Activated naive CD4-positive, alpha-beta T cell treated with anti-CD3 and anti-CD28 coated beads, Interleukin-2, amount 10 ng/mL, durations not matched to agents 7 days and 5 days (primary cell): ENCODE measurements at regions of chr12 and their contacts with region 1.

Region 1: DNA sequence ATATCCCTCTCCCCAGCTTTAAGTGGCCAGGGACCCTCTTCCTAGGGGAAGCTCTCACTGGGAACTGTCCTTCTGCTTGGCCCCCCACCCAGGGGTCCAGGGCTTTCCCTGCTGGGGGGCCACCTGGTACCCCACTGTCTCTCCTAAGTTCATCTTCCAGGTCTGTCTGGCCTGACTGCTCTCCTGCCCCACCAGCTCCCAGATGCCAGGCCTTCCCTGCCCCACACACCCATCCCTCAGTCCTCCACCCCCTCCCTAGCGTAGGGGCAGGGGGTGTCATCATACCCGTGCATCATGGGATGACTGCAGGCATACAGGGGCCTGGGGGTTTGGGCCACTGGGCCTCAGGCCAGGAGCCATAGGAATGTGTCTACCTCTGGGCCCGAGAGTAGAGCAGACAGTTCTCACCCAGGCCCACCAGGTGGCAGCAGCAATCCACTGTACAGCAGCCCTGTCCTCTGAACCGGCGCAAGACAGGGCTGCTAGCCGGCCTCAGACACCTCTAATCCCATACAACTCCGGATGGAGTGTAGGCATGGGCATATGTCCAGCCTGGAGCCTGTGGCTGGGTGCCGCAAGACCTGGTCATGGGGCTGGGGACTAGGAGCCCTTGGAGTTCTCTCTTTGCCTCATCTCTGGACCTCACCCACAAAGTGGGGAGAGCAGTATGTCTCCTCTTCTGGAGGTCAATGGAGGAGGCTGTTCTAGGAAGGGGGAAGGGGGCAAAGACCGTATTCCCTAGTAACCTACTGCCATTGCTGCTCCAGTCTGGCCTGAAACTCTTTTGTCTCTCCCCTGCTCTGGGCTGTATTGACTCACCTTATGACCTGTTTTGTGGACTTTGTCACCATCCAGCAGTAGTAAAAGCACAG is 10.0 kb upstream of the SMARCD1 start:
- DNase-seq: peak; percentile 88
- H3K4me3 Mint-ChIP-seq: no peak overlapping the region
- H3K27ac Mint-ChIP-seq: no peak overlapping the region
- H3K4me1 Mint-ChIP-seq: peaks cover 7% of the 10 kb centered on the region
- H3K27me3 Mint-ChIP-seq: peaks cover 41% of the 10 kb centered on the region

Region 2: GRCh38 chr12:50043854-50044253 is 31.3 kb before region 1 on chr12:
- CTCF ChIA-PET with region 1: interaction called, 232 read pairs
- DNase-seq: no peak
- H3K4me3 Mint-ChIP-seq: no peak overlapping the region
- H3K27ac Mint-ChIP-seq: no peak overlapping the region
- H3K4me1 Mint-ChIP-seq: peaks cover 3% of the 10 kb centered on the region
- H3K27me3 Mint-ChIP-seq: peaks cover 26% of the 10 kb centered on the region

Region 3: DNA sequence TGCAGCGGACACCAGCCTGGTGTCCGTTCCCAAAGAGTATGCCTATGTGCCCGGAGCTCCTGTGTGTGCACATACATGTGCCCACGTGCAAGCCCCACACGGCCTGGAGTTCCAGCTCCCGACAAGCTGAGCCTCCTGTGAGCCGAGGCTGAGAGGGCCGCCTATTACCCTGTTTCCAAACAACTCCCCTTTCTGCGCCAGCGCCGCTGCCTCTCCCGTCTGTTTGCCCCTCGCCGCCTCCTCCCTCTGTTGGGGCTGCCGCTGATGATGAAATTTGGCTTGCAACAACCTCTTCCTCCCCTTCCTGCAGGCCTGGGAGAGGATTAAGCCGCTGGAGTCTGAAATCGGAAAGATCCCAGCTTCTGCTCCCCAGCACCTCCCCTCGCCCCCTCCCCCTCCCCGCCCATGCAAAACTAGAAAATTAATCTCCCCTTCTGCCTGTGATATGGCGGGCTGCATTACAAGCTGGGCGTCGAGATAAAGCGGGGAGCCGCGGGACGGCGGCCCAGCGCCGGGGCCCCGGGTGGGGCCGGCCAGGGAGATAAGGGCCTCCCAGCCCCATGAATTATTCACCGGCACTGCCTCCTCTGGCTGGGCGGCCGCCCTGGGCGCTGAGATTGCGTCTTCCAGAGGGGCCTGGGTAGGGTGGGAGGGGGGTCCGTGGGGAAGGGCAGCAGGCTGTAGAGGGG is 24.6 kb before region 1 on chr12:
- CTCF ChIA-PET with region 1: interaction called, 37 read pairs
- DNase-seq: no peak
- H3K4me3 Mint-ChIP-seq: no peak overlapping the region
- H3K27ac Mint-ChIP-seq: no peak overlapping the region
- H3K4me1 Mint-ChIP-seq: no peaks in the 10 kb centered on the region
- H3K27me3 Mint-ChIP-seq: peaks cover 56% of the 10 kb centered on the region

Region 4: GRCh38 chr12:50120521-50120920 is 45.3 kb after region 1 on chr12:
- CTCF ChIA-PET with region 1: no interaction called
- DNase-seq: no peak
- H3K4me3 Mint-ChIP-seq: no peak overlapping the region
- H3K27ac Mint-ChIP-seq: no peak overlapping the region
- H3K4me1 Mint-ChIP-seq: peaks cover 24% of the 10 kb centered on the region
- H3K27me3 Mint-ChIP-seq: no peaks in the 10 kb centered on the region